Heart left ventricle (tissue), 16 donors: ENCODE measurements at regions of chr17 and their contacts with region 1.

Region 1: DNA sequence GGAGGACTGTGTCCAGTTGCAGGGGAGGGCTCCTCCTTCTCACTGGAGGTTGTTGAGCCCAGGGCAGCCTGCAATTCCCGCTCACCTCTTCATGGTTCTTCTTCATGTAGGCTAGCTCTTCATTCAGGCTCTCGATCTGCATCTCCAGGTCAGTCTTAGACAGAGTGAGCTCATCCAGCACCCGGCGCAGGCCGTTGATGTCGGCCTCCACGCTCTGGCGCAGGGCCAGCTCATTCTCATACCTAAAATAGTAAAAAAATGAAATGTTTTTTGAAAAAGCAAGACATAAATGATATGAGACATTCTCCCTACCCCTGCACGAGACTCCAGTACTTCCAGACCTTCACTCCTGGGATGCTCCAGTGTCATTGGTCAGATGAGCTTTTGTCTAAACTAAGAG is 2.2 kb downstream of the KRT13 start:
- DNase-seq: no peak
- ATAC-seq: no peak
- H3K4me3 ChIP-seq: no peak overlapping the region
- H3K27ac ChIP-seq: no peak overlapping the region
- H3K4me1 ChIP-seq: peaks cover 0 to 5% (median 0%) of the 10 kb centered on the region in 12 donors
- H3K27me3 ChIP-seq: peaks cover 0 to 11% (median 0%) of the 10 kb centered on the region in 9 donors
- CTCF ChIP-seq: no peak
- POLR2A ChIP-seq: no peak

Region 2: GRCh38 chr17:41567317-41567716 is 64.1 kb after region 1 on chr17:
- intact Hi-C with region 1: loop called in 1 of 10 experiments (anchors 2 kb)
- DNase-seq: peak in 1 of 5 donors; percentile 12
- ATAC-seq: no peak
- H3K4me3 ChIP-seq: no peak overlapping the region
- H3K27ac ChIP-seq: no peak overlapping the region
- H3K4me1 ChIP-seq: no peaks in the 10 kb centered on the region
- H3K27me3 ChIP-seq: peaks cover 0 to 45% (median 8%) of the 10 kb centered on the region in 9 donors
- CTCF ChIP-seq: no peak
- POLR2A ChIP-seq: no peak

Region 3: GRCh38 chr17:41602524-41602923 is 99.3 kb after region 1 on chr17:
- intact Hi-C with region 1: no loop called
- DNase-seq: no peak
- ATAC-seq: no peak
- H3K4me3 ChIP-seq: no peak overlapping the region
- H3K27ac ChIP-seq: no peak overlapping the region
- H3K4me1 ChIP-seq: no peaks in the 10 kb centered on the region
- H3K27me3 ChIP-seq: peaks cover 0 to 14% (median 0%) of the 10 kb centered on the region in 9 donors
- CTCF ChIP-seq: no peak
- POLR2A ChIP-seq: no peak